ENCODE measurements at regions of chr6 and their contacts with region 1.

Region 1: GRCh38 chr6:26550250-26550993 is 12.3 kb downstream of the HMGN4 start:
- DNase-seq: peak; percentile 90
- ATAC-seq: peak; percentile 81
- H3K4me3 Mint-ChIP-seq: no peak overlapping the region; the same call in 1 of the 2 replicates
- H3K27ac Mint-ChIP-seq: peak overlapping the region; percentile 98
- H3K4me1 Mint-ChIP-seq: peaks cover 17% of the 10 kb centered on the region
- H3K27me3 Mint-ChIP-seq: no peaks in the 10 kb centered on the region
- CTCF ChIP-seq: no peak

Region 2: GRCh38 chr6:26501482-26501986 is 48.9 kb before region 1 on chr6:
- CTCF ChIA-PET with region 1: no interaction called
- POLR2A ChIA-PET with region 1: no interaction called
- DNase-seq: peak; percentile 59
- ATAC-seq: peak; percentile 88
- H3K4me3 Mint-ChIP-seq: peak overlapping the region; percentile 74
- H3K27ac Mint-ChIP-seq: no peak overlapping the region
- H3K4me1 Mint-ChIP-seq: peaks cover 20% of the 10 kb centered on the region
- H3K27me3 Mint-ChIP-seq: peaks cover 64% of the 10 kb centered on the region
- CTCF ChIP-seq: no peak

Region 3: GRCh38 chr6:26537846-26538571 is 12.4 kb before region 1 on chr6 and contains the start of gene HMGN4:
- CTCF ChIA-PET with region 1: interaction called, 10 read pairs
- POLR2A ChIA-PET with region 1: interaction called, 11 read pairs
- DNase-seq: peak; percentile 81
- ATAC-seq: peak; percentile 70
- H3K4me3 Mint-ChIP-seq: peak within 1 kb of the TSS; percentile 96
- H3K27ac Mint-ChIP-seq: peak within 1 kb of the TSS; percentile 100
- H3K4me1 Mint-ChIP-seq: peaks cover 34% of the 10 kb centered on the region
- H3K27me3 Mint-ChIP-seq: no peaks in the 10 kb centered on the region
- CTCF ChIP-seq: no peak
- total RNA-seq, gene HMGN4: 57.1 to 67.4 TPM (median 57.6 TPM) in 3 replicates